Heart left ventricle (tissue), 16 donors: ENCODE measurements at regions of chr4 and their contacts with region 1.

Region 1: DNA sequence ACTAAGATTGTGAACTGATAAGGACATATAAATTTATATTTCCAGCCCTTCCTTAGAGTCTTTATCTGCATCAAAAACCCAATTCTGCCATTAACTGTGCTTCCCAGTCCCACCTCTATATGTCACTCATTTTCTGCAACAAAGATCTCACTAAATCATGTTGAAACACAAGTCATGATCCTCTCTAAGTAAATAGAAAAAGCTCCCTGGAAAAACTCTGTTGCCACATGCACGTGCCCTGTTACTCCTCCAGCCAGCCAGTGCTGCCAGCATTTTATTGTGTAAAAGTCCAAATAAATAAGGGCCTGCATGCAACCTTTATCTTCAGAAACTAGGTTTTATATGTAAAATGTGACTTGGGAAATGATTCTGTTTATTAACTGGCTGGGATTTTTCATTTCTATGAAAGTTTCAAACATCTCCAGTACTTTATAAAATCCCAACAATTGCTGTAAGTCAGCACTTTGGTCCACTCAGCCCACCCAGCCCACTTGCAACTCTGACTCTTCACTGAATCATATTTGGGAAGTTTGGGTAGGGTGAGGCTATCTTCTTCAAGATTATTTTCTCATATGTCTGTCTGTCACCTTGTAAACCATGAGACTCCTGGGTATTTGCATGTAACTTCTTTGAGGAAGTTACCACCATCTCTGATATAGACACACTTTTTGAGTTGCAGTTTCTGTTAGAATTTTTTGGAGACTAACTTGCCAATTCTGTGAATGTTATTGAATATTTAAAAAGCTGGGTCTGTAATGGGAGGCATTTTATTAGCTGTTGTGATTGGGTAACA is 40.0 kb upstream of the SMARCA5 start:
- DNase-seq: no peak
- ATAC-seq: peak in 1 of 4 donors; percentile 17
- H3K4me3 ChIP-seq: no peak overlapping the region
- H3K27ac ChIP-seq: no peak overlapping the region
- H3K4me1 ChIP-seq: no peaks in the 10 kb centered on the region
- H3K27me3 ChIP-seq: no peaks in the 10 kb centered on the region
- CTCF ChIP-seq: no peak
- POLR2A ChIP-seq: no peak

Region 2: GRCh38 chr4:143406523-143406922 is 67.0 kb before region 1 on chr4:
- intact Hi-C with region 1: loop called in 2 of 10 experiments (anchors 5 to 10 kb)
- DNase-seq: peak in 4 of 5 donors; percentile 50 to 69 (median 58)
- ATAC-seq: peak; percentile 49 to 85 (median 68)
- H3K4me3 ChIP-seq: no peak overlapping the region
- H3K27ac ChIP-seq: peak overlapping the region; percentile 1 to 70 (median 53)
- H3K4me1 ChIP-seq: peaks cover 10 to 100% (median 87%) of the 10 kb centered on the region in 12 donors
- H3K27me3 ChIP-seq: no peaks in the 10 kb centered on the region
- CTCF ChIP-seq: no peak
- POLR2A ChIP-seq: no peak

Region 3: GRCh38 chr4:143411527-143412480 is 61.7 kb before region 1 on chr4:
- intact Hi-C with region 1: loop called in 1 of 10 experiments (anchors 10 kb)
- DNase-seq: no peak
- ATAC-seq: peak; percentile 32 to 68 (median 58)
- H3K4me3 ChIP-seq: peak overlapping the region in 6 of 12 donors; percentile 1 to 36 (median 14)
- H3K27ac ChIP-seq: peak overlapping the region; percentile 24 to 80 (median 52)
- H3K4me1 ChIP-seq: peaks cover 8 to 80% (median 49%) of the 10 kb centered on the region in 12 donors
- H3K27me3 ChIP-seq: no peaks in the 10 kb centered on the region
- CTCF ChIP-seq: no peak
- POLR2A ChIP-seq: no peak

Region 4: GRCh38 chr4:143514497-143514896 is 41.0 kb after region 1 on chr4:
- intact Hi-C with region 1: no loop called
- DNase-seq: peak; percentile 49 to 66 (median 55)
- ATAC-seq: peak in 3 of 4 donors; percentile 32 to 42 (median 37)
- H3K4me3 ChIP-seq: peak overlapping the region; percentile 69 to 99 (median 89)
- H3K27ac ChIP-seq: peak overlapping the region; percentile 88 to 100 (median 98)
- H3K4me1 ChIP-seq: peaks cover 9 to 50% (median 41%) of the 10 kb centered on the region in 12 donors
- H3K27me3 ChIP-seq: no peaks in the 10 kb centered on the region
- CTCF ChIP-seq: no peak
- POLR2A ChIP-seq: no peak